Pancreas (tissue), 10 donors: ENCODE measurements at regions of chr19 and their contacts with region 1.

Region 1: GRCh38 chr19:13277104-13277809 is 127.0 kb downstream of the IER2 start:
- DNase-seq: peak in 3 of 6 donors; percentile 39 to 59 (median 47)
- ATAC-seq: peak; percentile 96 to 98 (median 96)
- H3K4me3 ChIP-seq: no peak overlapping the region
- H3K27ac ChIP-seq: no peak overlapping the region
- H3K4me1 ChIP-seq: no peaks in the 10 kb centered on the region
- H3K27me3 ChIP-seq: no peaks in the 10 kb centered on the region
- CTCF ChIP-seq: peak; percentile 33 to 69 (median 46)

Region 2: GRCh38 chr19:13102666-13103580 is 174.3 kb before region 1 on chr19 and contains the start of gene LYL1:
- intact Hi-C with region 1: no loop called
- DNase-seq: peak in 3 of 6 donors; percentile 65 to 81 (median 77)
- ATAC-seq: peak; percentile 33 to 64 (median 57)
- H3K4me3 ChIP-seq: peak within 1 kb of the TSS; percentile 3 to 37 (median 15)
- H3K27ac ChIP-seq: peak within 1 kb of the TSS in 3 of 4 donors; percentile 29 to 65 (median 63)
- H3K4me1 ChIP-seq: peaks cover 0 to 7% (median 0%) of the 10 kb centered on the region in 3 donors
- H3K27me3 ChIP-seq: no peaks in the 10 kb centered on the region
- CTCF ChIP-seq: no peak
- total RNA-seq, gene LYL1: 0.51 to 5.5 (median 1.7) TPM

Region 3: GRCh38 chr19:13150187-13150930 is 126.9 kb before region 1 on chr19 and contains the starts of genes IER2 and STX10:
- intact Hi-C with region 1: no loop called
- DNase-seq: peak; percentile 91 to 98 (median 96)
- ATAC-seq: peak; percentile 47 to 67 (median 66)
- H3K4me3 ChIP-seq: peak within 1 kb of the TSS; percentile 53 to 100 (median 91)
- H3K27ac ChIP-seq: peak within 1 kb of the TSS; percentile 89 to 99 (median 96)
- H3K4me1 ChIP-seq: peaks cover 0 to 6% (median 3%) of the 10 kb centered on the region in 3 donors
- H3K27me3 ChIP-seq: no peaks in the 10 kb centered on the region
- CTCF ChIP-seq: peak; percentile 30 to 53 (median 45)
- total RNA-seq, gene IER2: 32.4 to 59.2 (median 37.7) TPM
- total RNA-seq, gene STX10: 14.0 to 24.6 (median 17.0) TPM

Region 4: GRCh38 chr19:13428336-13428735 is 151.1 kb after region 1 on chr19:
- intact Hi-C with region 1: loop called in 1 of 3 experiments (anchors 10 kb)
- DNase-seq: no peak
- ATAC-seq: no peak
- H3K4me3 ChIP-seq: no peak overlapping the region
- H3K27ac ChIP-seq: no peak overlapping the region
- H3K4me1 ChIP-seq: no peaks in the 10 kb centered on the region
- H3K27me3 ChIP-seq: no peaks in the 10 kb centered on the region
- CTCF ChIP-seq: peak in 1 of 4 donors; percentile 14

Region 5: GRCh38 chr19:13588957-13589833 is 311.9 kb after region 1 on chr19:
- intact Hi-C with region 1: loop called in 2 of 3 experiments (anchors 5 kb)
- DNase-seq: peak; percentile 32 to 94 (median 70)
- ATAC-seq: peak; percentile 69 to 96 (median 94)
- H3K4me3 ChIP-seq: no peak overlapping the region
- H3K27ac ChIP-seq: no peak overlapping the region
- H3K4me1 ChIP-seq: no peaks in the 10 kb centered on the region
- H3K27me3 ChIP-seq: peaks cover 0 to 12% (median 0%) of the 10 kb centered on the region in 4 donors
- CTCF ChIP-seq: peak; percentile 93 to 98 (median 96)